Left ventricle myocardium superior (tissue), 1 donor: ENCODE measurements at regions of chr1 and their contacts with region 1.

Region 1: DNA sequence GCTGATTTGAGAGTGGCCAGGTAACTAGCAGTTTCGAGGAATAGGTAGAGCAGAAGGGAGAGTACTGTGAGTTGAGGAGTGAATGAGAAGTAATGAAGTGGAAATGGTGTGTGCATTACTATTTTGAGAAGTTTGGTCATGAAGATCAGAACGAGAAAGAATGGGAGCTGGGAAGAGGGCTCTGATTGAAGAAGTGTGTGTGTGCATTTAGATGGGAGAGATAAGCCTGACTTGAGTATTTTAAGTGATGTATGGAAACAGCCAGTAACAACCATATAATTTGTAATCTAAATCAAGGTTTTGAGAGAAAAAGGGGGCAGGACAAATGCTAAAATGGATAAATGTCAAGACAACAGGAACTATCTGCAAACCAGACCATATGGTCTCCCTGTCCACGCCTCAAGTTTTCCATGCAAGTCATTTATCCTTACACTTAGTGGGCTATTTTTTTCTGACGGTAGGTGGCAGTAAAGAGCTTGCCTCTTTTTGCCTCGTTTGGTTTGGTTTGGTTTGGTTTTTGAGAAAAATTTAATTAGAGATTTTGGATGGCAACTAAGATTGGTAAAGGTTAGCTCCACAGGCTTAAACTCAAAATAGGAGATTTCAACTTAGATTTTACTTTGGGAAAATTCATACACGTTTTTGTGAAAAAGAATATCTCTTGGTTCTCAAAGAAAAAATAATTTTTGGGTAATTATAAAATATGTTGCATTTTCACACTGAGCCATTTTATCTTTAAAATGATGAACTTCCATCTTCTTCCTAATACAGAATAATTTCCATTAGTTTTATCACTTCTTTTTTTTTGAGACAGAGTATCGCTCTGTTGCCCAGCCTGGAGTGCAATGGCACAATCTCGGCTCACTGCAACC is 9.5 kb upstream of the B3GALNT2 start:
- DNase-seq: no peak
- ATAC-seq: peak; percentile 38

Region 2: GRCh38 chr1:235783148-235783776 is 269.5 kb after region 1 on chr1:
- intact Hi-C with region 1: loop called (anchors 5 kb)
- DNase-seq: no peak
- ATAC-seq: no peak

Region 3: DNA sequence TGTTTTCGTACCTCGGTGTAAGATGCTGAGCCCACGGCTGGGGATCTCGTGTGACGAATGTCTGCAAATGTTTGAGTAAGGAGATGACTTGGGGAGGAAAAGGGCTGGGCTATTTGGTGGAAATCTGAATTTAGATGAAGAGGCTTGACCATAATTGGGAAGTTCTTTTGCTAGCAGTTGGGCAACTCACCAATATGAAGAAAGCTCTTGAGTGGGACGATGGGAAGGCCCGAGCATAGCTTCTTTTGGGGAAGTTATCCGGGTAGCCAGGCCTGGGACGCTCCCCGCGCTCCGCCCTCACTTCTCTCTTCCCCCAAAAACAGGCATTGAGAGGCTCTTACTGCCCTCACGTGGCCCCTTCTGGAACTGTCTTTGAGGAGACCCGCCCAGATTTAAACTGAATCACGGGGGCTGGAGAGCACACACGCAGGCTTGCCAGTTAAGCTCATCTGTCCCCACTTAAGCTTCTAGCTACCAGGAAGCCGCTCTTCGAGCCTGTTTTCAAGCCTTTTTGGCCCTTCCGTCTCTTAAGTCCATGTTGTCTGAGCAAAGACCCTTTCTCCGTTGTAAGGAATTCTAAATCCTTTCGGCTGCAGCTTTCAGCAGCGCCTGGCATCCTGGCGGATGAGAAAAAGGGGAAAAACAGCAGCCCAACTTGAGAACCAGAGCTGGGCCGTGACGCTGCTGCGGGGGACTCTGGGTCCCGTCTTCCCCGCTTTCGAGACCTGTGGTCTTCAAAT is 458.0 kb after region 1 on chr1:
- intact Hi-C with region 1: loop called (anchors 10 kb)
- DNase-seq: peak; percentile 92
- ATAC-seq: peak; percentile 92